ENCODE measurements at regions of chr10 and their contacts with region 1.

Region 1: DNA sequence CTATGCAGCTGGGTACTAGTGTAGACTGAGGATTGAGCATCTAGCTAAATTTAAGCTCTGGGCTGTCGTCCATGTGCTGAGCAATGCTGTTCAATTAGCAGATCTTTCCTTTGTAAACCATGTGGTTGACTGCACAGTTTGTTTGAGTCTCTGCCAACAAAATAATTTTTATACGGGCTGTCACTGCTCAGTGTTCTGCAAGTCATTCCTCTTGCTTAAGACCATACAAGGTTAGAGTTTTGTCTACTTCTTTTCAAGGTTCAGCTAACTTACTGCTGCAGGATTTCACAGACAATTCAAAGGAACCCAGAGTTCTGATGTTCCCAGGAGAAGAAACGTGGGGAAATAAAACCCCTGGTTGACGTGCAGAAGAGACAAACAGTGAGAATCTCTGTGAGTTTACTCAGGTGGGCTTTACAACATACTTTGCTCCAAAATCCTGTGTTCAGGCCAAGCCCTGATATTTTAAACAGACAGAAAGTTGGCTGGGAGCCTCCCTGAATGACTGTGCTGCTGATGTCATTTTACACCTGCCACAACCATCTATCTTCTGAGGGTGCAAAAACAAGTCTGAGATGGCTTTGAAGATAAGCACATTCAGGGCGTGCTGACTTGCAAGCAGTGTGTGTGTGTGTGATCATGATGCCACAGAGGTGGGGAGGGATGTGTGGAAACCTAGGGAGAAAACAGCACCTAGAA is 177.1 kb upstream of the SVIL start:
- DNase-seq: peak; percentile 32 to 90
- H3K4me3 ChIP-seq: no peak overlapping the region
- H3K27ac ChIP-seq: peak overlapping the region; percentile 86 to 93
- H3K4me1 ChIP-seq: peaks cover 3 to 24% of the 10 kb centered on the region in 2 donors
- H3K27me3 ChIP-seq: no peaks in the 10 kb centered on the region
- CTCF ChIP-seq: no peak

Region 2: GRCh38 chr10:29784175-29784773 is 27.6 kb before region 1 on chr10:
- intact Hi-C with region 1: loop called (anchors 2 kb)
- DNase-seq: peak; percentile 63 to 93
- H3K4me3 ChIP-seq: no peak overlapping the region
- H3K27ac ChIP-seq: peak overlapping the region; percentile 85 to 87
- H3K4me1 ChIP-seq: peaks cover 3 to 25% of the 10 kb centered on the region in 2 donors
- H3K27me3 ChIP-seq: no peaks in the 10 kb centered on the region
- CTCF ChIP-seq: no peak

Region 3: DNA sequence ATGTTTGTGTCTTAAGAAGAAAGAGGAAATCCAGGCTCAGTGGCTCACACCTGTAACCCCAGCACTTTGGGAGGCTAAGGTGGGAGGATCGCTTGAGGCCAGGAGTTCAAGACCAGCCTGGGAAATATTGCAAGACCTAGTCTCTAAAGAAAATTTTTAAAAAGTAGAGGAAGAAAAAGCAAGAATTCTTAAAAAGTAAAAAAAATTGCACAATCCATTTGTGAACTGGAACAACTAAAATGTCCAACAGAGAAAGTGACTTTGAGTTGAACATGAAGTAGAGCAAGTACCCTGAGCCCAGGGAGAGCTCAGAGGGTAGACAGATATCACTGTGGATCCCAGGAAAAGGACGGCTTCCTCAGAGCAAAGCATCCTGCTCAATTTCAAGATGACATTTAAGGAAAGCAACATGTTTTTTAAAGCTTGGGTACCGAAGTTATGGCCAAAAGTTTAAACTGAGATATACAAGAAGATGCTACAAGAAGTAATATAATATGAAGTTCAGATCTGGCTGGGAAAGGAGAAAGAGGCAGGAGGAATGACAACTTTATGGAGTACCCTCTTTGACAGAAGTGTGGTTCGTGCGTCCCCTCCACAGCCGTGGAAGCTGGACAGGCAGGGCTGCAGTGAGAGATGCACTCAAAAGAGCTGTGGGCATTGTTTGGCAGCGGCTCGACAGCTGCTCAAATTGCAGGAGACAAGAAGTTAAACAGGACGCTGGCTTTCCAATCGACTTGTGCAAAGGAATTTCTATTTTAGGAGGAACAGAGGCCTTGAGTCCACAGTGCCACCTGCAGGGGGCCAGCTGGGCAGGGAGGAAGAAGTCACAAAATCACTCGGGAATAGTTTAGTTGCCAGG is 46.2 kb after region 1 on chr10:
- intact Hi-C with region 1: loop called (anchors 5 kb)
- DNase-seq: peak in 1 of 2 donors; percentile 91
- H3K4me3 ChIP-seq: peak overlapping the region in 1 of 2 donors; percentile 15
- H3K27ac ChIP-seq: peak overlapping the region; percentile 66 to 68
- H3K4me1 ChIP-seq: peaks cover 9 to 16% of the 10 kb centered on the region in 2 donors
- H3K27me3 ChIP-seq: no peaks in the 10 kb centered on the region
- CTCF ChIP-seq: peak; percentile 65 to 84 (median 81)

Region 4: GRCh38 chr10:29881336-29881771 is 69.5 kb after region 1 on chr10:
- intact Hi-C with region 1: loop called (anchors 5 kb)
- DNase-seq: peak in 1 of 2 donors; percentile 79
- H3K4me3 ChIP-seq: no peak overlapping the region
- H3K27ac ChIP-seq: peak overlapping the region; percentile 95 to 98
- H3K4me1 ChIP-seq: peaks cover 18 to 55% of the 10 kb centered on the region in 2 donors
- H3K27me3 ChIP-seq: no peaks in the 10 kb centered on the region
- CTCF ChIP-seq: no peak

Region 5: GRCh38 chr10:29908962-29909361 is 97.1 kb after region 1 on chr10:
- intact Hi-C with region 1: no loop called
- DNase-seq: no peak
- H3K4me3 ChIP-seq: no peak overlapping the region
- H3K27ac ChIP-seq: no peak overlapping the region
- H3K4me1 ChIP-seq: no peaks in the 10 kb centered on the region
- H3K27me3 ChIP-seq: no peaks in the 10 kb centered on the region
- CTCF ChIP-seq: no peak

Region 6: DNA sequence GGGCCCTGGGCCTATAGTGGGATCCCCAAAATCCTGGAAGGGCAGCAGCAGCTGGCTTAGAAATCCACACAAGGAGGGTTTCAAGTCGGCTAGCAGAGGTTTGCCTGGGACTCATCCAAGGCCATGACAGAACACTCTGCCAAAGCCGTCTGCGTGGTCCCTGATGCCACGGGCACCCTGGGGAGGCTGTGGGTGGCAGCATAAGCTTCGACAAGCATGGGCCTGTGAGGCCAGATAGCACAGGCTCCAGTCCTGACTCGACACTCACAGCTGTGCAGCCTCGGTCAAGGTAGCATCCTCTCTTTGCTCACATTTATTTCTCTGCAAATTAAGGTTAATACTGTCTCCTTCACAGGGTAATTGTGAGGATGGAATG is 109.2 kb after region 1 on chr10:
- intact Hi-C with region 1: no loop called
- DNase-seq: no peak
- H3K4me3 ChIP-seq: peak overlapping the region in 1 of 2 donors; percentile 44
- H3K27ac ChIP-seq: peak overlapping the region; percentile 42 to 60
- H3K4me1 ChIP-seq: peaks cover 0 to 20% of the 10 kb centered on the region in 2 donors
- H3K27me3 ChIP-seq: no peaks in the 10 kb centered on the region
- CTCF ChIP-seq: peak in 1 of 3 experiments; percentile 18

Region 7: GRCh38 chr10:30013757-30014156 is 201.9 kb after region 1 on chr10:
- intact Hi-C with region 1: no loop called
- DNase-seq: peak in 1 of 2 donors; percentile 81
- H3K4me3 ChIP-seq: no peak overlapping the region
- H3K27ac ChIP-seq: peak overlapping the region in 1 of 2 donors; percentile 5
- H3K4me1 ChIP-seq: peaks cover 9 to 59% of the 10 kb centered on the region in 2 donors
- H3K27me3 ChIP-seq: no peaks in the 10 kb centered on the region
- CTCF ChIP-seq: no peak

Measured in ascending aorta (tissue), 2 donors.